CD8-positive, alpha-beta T cell (primary cell): ENCODE measurements at regions of chr12 and their contacts with region 1.

Region 1: DNA sequence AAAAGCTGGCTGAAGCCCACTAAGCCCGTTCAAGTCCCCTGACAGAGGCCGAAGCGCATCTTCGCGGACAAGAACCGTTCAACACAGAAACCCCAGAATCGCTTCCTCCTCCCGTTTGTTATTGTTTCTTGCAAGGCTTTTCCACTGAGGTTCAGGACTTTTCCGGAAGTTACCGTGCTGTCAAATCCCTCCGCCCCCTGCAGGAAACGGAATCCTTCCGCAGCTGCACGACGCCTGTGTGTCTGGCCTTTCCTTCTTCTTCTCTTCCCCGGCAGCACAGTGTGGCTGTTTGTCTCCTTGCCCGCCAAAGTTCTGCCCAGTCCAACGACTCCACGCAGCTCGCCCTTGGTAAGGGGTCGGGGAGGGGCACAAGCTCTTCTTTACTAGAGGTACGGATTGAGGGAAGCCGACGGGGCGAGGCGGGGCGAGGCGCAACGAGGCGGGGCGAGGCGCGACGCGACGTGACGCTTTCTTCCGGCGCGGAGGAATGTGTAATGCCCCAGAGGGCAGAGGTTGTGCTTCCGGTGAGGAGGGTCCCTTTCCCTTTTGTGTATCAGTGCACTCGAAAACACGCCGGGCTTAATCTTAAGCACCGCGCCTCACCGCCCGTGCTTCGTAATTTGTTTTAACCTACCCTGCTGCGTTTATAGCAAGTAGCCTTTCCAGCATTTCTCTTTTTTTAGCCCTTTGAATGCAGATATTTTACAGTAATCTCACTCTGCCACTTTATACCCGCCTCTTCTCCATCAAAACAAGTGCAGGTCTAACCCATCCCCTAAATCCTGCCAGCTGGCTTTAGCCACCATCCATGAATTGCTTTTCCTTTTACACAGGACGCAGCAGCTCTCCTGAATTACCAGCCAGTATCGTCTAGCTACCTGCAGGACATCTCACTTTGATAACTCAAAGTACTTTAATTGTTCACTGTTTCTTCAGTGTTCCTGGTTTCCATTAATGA is at the start of gene KDM5A:
- DNase-seq: peak; percentile 78 to 96 (median 90)
- ATAC-seq: peak; percentile 90
- H3K4me3 ChIP-seq: peak within 1 kb of the TSS; percentile 91 to 96
- H3K4me3 Mint-ChIP-seq: peak within 1 kb of the TSS; percentile 93
- H3K27ac ChIP-seq: peak within 1 kb of the TSS; percentile 90 to 94
- H3K27ac Mint-ChIP-seq: peak within 1 kb of the TSS; percentile 98
- H3K4me1 ChIP-seq: peaks cover 39% of the 10 kb centered on the region
- H3K4me1 Mint-ChIP-seq: peaks cover 38% of the 10 kb centered on the region
- H3K27me3 ChIP-seq: no peaks in the 10 kb centered on the region
- H3K27me3 Mint-ChIP-seq: no peaks in the 10 kb centered on the region
- CTCF ChIP-seq: no peak
- total RNA-seq, gene KDM5A: 144 to 145 TPM

Region 2: DNA sequence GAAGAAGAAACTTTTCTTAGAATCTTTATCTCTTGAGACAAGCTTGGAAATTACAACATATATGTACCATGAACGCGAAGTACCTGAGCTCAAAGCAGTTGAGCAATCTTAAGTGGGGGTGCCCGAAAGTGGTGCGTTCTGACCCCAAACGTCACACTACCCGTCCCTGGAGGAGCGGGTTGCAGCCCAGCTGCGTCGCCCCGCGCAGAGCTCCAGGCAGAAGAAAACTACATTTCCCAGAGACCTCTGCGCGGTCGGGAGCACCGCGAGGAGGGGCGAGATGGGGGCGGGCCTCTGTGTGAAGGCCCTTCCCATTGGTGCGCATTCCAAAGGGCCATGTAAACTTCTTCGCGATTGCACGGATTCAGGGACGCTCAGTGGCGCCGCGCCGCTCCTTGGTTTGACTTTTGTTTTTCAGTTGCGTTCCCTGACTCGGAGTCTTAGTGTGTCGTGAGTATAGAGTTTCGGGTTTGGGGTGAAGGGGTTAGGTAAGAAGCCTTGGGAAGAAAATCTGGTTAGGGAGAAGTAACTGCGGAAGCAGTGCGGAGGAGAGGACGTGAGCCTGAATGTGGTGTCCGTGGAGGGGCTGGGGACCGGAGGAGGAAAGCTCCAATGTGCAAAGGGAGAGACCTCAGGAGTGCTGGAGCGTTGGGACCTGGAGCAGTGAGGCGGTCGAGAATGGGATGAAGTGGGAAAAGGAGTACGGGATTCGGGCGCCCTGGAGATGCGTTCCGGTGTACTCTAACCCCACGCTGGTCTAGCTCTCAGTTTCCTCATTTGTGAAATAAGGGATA is 12.0 kb after region 1 on chr12 and contains the start of gene CCDC77:
- CTCF ChIA-PET with region 1: interaction called, 8 read pairs
- POLR2A ChIA-PET with region 1: interaction called, 35 read pairs
- intact Hi-C with region 1: loop called (anchors 1 kb)
- DNase-seq: peak; percentile 87 to 96 (median 92)
- ATAC-seq: peak; percentile 100
- H3K4me3 ChIP-seq: peak within 1 kb of the TSS; percentile 81 to 96
- H3K4me3 Mint-ChIP-seq: no peak within 1 kb of the TSS
- H3K27ac ChIP-seq: peak within 1 kb of the TSS; percentile 43 to 69
- H3K27ac Mint-ChIP-seq: no peak within 1 kb of the TSS
- H3K4me1 ChIP-seq: peaks cover 10% of the 10 kb centered on the region
- H3K4me1 Mint-ChIP-seq: no peaks in the 10 kb centered on the region
- H3K27me3 ChIP-seq: no peaks in the 10 kb centered on the region
- H3K27me3 Mint-ChIP-seq: no peaks in the 10 kb centered on the region
- CTCF ChIP-seq: peak; percentile 40
- total RNA-seq, gene CCDC77: 2.8 to 5.2 TPM

Region 3: DNA sequence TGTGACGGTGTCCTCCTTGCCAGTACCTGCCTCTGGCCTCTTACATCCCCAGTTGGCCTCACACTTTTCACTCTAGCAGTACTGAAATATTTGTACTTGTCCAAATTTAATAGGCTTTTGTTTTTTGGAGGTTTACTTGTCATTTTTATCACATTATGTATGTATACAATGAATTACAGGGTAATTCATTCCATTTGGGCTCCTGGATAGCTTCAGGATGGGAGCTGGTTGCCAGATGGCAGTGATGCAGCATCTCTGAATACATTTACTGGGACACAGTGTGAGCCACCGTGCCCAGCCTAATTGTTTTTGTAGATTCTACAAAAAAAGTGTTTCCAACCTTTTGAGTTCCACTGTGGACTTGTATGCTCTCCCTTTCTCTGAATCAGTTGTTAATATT is 25.4 kb after region 1 on chr12:
- CTCF ChIA-PET with region 1: no interaction called
- POLR2A ChIA-PET with region 1: no interaction called
- intact Hi-C with region 1: loop called in 1 of 2 experiments (anchors 1 kb)
- DNase-seq: no peak
- ATAC-seq: no peak
- H3K4me3 ChIP-seq: no peak overlapping the region
- H3K4me3 Mint-ChIP-seq: no peak overlapping the region
- H3K27ac ChIP-seq: no peak overlapping the region
- H3K27ac Mint-ChIP-seq: no peak overlapping the region
- H3K4me1 ChIP-seq: no peaks in the 10 kb centered on the region
- H3K4me1 Mint-ChIP-seq: no peaks in the 10 kb centered on the region
- H3K27me3 ChIP-seq: no peaks in the 10 kb centered on the region
- H3K27me3 Mint-ChIP-seq: no peaks in the 10 kb centered on the region
- CTCF ChIP-seq: no peak

Region 4: GRCh38 chr12:990661-991349 is 601.4 kb after region 1 on chr12 and contains the start of gene ERC1:
- CTCF ChIA-PET with region 1: no interaction called
- POLR2A ChIA-PET with region 1: no interaction called
- intact Hi-C with region 1: loop called in 1 of 2 experiments (anchors 5 kb)
- DNase-seq: peak; percentile 71 to 92 (median 80)
- ATAC-seq: peak; percentile 83
- H3K4me3 ChIP-seq: peak within 1 kb of the TSS; percentile 68 to 98
- H3K4me3 Mint-ChIP-seq: peak within 1 kb of the TSS; percentile 94
- H3K27ac ChIP-seq: peak within 1 kb of the TSS; percentile 78 to 82
- H3K27ac Mint-ChIP-seq: peak within 1 kb of the TSS; percentile 95
- H3K4me1 ChIP-seq: peaks cover 27% of the 10 kb centered on the region
- H3K4me1 Mint-ChIP-seq: peaks cover 50% of the 10 kb centered on the region
- H3K27me3 ChIP-seq: no peaks in the 10 kb centered on the region
- H3K27me3 Mint-ChIP-seq: no peaks in the 10 kb centered on the region
- CTCF ChIP-seq: no peak
- total RNA-seq, gene ERC1: 34.5 to 34.6 TPM

Region 5: GRCh38 chr12:1804545-1805332 is 1415.3 kb after region 1 on chr12:
- CTCF ChIA-PET with region 1: no interaction called
- POLR2A ChIA-PET with region 1: no interaction called
- intact Hi-C with region 1: loop called in 1 of 2 experiments (anchors 10 kb)
- DNase-seq: peak; percentile 69 to 93 (median 87)
- ATAC-seq: peak; percentile 97
- H3K4me3 ChIP-seq: no peak overlapping the region
- H3K4me3 Mint-ChIP-seq: no peak overlapping the region
- H3K27ac ChIP-seq: peak overlapping the region in 1 of 2 experiments; percentile 66
- H3K27ac Mint-ChIP-seq: peak overlapping the region; percentile 73
- H3K4me1 ChIP-seq: peaks cover 6% of the 10 kb centered on the region
- H3K4me1 Mint-ChIP-seq: peaks cover 10% of the 10 kb centered on the region
- H3K27me3 ChIP-seq: no peaks in the 10 kb centered on the region
- H3K27me3 Mint-ChIP-seq: no peaks in the 10 kb centered on the region
- CTCF ChIP-seq: no peak